H1 (cell line): ENCODE measurements at regions of chr15 and their contacts with region 1.

Region 1: DNA sequence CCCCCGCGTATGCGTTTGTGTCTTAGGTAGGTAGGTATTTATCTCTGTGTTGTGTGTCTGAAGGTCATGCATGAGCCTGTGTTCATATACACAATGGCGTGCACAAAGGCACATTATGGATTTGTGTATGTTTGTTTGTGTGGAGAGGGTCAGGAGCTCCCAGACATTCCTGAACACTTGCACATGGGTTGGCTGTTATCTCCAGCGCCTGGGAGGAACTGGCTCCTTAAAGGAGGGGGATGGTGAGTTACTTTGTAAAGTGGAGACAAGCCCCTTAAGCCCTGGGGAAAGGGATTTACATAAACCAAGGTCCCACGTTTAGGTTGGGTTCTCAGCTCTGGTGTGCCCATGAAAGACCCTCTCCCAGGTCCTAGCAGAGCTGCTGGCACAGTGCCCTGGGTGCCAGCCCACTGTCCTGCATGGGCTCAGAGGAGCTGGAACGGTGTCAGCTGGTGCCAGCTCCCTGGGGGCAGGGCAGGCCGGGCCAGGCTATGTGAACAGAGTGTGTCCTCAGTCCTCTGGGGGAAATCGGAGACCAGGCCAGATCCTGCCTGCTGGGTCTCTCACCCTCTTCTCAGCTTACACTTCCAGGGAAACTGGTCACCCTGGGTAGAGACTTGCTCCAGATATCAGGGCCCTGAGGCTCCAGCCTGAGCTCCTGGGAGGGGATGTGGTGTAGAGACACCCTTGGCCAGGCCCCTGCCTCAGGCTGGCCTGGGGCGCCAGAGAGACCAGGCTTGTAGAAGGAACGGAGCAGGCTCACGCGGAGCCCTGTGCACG is 25.1 kb downstream of the SNX33 start:
- DNase-seq: no peak
- H3K4me3 ChIP-seq: no peak overlapping the region
- H3K27ac ChIP-seq: no peak overlapping the region
- H3K4me1 ChIP-seq: peaks cover 7 to 14% (median 9%) of the 10 kb centered on the region in 4 experiments
- H3K27me3 ChIP-seq: no peaks in the 10 kb centered on the region
- CTCF ChIP-seq: no peak
- EP300 ChIP-seq: no peak
- POLR2A ChIP-seq: no peak
- RAD21 ChIP-seq: no peak

Region 2: DNA sequence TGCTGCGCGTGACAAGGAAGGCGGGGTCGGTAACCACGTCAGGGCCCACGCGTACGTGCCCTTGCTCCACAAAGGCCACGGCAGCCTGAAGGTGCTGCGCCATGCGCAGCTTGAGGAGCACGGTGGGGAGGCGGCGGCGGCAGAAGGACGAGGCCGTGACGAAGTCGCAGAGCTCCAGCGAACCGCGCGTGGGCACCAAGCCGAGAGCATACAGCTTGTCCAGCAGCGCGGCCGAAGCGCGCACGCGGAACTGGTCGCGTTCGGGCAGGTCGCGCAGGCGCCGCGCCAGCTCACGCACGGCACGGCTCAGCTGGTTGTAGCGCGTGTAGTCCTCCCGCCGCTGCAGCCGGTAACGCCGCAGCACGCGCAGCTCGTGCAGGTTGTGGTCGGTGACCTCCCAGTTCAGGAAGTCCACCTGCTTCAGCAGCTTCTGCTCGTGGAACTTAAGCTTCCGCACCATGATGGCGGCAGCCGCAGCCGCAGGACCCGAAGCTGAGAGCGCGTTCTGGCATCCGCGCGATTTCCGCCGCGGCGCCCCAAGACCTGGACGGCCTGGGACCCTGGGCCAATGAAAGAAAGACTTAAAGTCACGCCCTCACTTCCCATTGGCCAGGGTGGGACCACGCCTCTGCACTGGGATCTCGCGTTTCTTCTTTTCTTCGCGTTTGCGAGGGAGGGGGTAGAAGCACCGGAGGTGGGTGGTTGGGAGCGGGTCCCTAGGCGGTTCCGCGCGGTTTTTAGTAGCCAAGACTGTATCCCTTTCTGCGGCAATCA is 32.9 kb before region 1 on chr15 and contains the start of gene IMP3:
- CTCF ChIA-PET with region 1: interaction called, 15 read pairs
- POLR2A ChIA-PET with region 1: interaction called, 9 read pairs
- DNase-seq: peak; percentile 89 to 92
- H3K4me3 ChIP-seq: peak within 1 kb of the TSS; percentile 82 to 99 (median 94)
- H3K27ac ChIP-seq: peak within 1 kb of the TSS; percentile 94
- H3K4me1 ChIP-seq: peaks cover 0 to 8% (median 6%) of the 10 kb centered on the region in 4 experiments; a peak in 5 of 7 replicates
- H3K27me3 ChIP-seq: no peaks in the 10 kb centered on the region
- CTCF ChIP-seq: no peak
- EP300 ChIP-seq: no peak
- POLR2A ChIP-seq: peak; percentile 92 to 97
- RAD21 ChIP-seq: no peak
- total RNA-seq, gene IMP3: 114 and 122 TPM in 2 replicates

Region 3: DNA sequence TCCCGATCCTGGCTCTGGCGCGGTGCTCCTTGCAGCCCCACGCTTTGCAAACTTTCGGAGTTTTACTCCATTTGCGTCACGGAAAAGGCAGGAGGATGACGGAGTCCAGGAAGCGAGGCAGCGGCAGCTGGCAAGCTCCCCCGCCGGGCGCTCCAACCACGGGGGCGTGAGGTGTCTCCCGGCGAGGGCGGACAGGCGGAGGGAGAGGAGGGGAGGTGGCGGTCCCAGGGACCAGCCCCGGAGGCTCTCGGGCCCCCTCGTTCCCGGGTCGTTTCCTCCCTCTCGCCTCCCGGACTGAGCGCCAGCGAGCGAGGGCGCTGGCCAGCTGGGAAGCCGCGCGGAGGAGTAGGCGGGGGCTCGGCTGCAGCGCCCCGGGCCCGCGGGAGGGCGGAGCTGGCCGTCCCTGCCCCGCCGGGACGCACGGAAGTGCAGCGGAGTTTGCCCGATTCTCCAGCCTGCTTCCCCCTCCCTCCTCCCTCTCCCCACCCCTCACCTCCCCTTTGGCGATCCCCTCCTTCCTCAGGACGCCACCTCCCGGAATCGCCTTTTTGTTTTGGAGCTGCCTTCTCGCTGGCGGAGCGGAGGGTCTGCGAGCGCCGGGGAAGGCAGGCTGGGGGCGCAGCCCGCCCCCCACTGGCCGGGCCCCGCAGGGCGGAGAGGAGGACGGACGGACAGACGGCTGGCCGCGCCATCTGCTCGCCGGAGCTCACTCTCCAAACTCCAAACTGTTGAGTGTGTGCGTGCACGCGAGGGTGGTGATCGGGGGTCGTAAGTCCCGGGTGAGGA is 25.3 kb before region 1 on chr15 and contains the start of gene SNX33:
- CTCF ChIA-PET with region 1: interaction called, 13 read pairs
- POLR2A ChIA-PET with region 1: interaction called, 10 read pairs
- DNase-seq: peak; percentile 76 to 85
- H3K4me3 ChIP-seq: peak within 1 kb of the TSS; percentile 63 to 90 (median 72)
- H3K27ac ChIP-seq: peak within 1 kb of the TSS; percentile 82
- H3K4me1 ChIP-seq: peaks cover 9 to 29% (median 16%) of the 10 kb centered on the region in 4 experiments
- H3K27me3 ChIP-seq: peaks cover 0 to 14% (median 10%) of the 10 kb centered on the region in 4 experiments; a peak in 6 of 7 replicates
- CTCF ChIP-seq: peak; percentile 36 to 57 (median 44)
- EP300 ChIP-seq: no peak; a peak in 1 of 3 replicates
- POLR2A ChIP-seq: no peak; a peak in 1 of 3 replicates
- RAD21 ChIP-seq: peak; percentile 16 to 40; a peak in 3 of 4 replicates
- total RNA-seq, gene SNX33: 22.9 and 24.8 TPM in 2 replicates

Region 4: DNA sequence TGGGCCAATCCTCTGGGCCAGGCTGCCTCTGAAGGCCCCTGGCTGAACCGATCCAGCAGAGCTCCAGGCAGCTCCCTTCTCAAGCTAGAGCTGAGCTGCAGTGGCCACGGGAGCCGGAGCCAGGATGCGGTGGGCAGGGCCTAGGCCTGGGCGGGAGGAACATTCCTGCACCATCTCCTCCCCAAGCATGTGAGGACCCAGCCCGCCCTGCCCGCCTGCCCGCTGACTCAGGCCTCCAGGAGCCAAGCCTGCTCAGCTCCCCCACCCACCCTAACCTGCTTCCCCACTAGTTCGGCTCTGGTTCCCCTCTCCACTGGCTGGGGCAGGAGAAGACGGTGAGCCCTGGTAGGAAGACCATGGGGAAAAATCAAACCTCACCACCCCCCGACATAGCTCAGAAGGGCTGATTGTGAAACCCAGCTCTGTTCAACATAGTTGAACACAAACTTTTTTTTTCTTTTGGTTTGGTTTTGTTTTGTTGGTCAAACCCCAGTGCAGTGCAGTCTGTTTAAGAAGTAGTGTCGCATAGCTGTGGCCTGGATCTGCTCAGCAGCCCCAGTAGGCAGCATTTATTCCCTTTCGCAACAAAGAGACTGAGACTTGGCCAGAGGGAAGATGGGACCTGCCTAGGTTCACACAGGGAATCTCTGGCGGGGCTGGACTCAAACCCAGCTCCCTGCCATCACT is 11.6 kb before region 1 on chr15:
- CTCF ChIA-PET with region 1: interaction called, 14 read pairs
- POLR2A ChIA-PET with region 1: interaction called, 7 read pairs
- DNase-seq: peak; percentile 36 to 64
- H3K4me3 ChIP-seq: no peak overlapping the region
- H3K27ac ChIP-seq: no peak overlapping the region
- H3K4me1 ChIP-seq: peaks cover 0 to 6% (median 2%) of the 10 kb centered on the region in 4 experiments; a peak in 2 of 7 replicates
- H3K27me3 ChIP-seq: peaks cover 0 to 3% (median 0%) of the 10 kb centered on the region in 4 experiments; a peak in 1 of 7 replicates
- CTCF ChIP-seq: no peak
- EP300 ChIP-seq: no peak
- POLR2A ChIP-seq: no peak
- RAD21 ChIP-seq: no peak